T-cell (primary cell): ENCODE measurements at regions of chr20 and their contacts with region 1.

Region 1: DNA sequence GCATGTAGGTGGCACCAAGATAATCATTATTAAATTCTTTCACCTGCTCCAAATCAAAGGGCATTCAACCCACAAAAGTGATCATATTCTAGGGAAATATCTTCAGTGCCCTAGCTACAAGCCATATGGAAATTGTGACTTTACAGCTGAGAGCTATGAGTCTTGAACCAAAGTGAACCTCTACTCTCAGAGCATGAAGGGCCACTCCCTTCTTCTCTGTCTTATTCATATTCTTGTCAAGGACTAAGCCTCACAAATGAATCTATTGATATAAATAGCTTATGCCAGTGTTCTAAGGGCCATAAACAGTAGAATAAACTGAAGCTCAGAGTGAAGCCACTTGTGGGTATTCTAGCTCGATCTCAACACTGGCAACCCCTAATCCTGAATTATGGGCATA is 29.6 kb downstream of the SPINT4 start:
- DNase-seq: no peak
- ATAC-seq: no peak
- H3K4me3 ChIP-seq: no peak overlapping the region
- H3K4me3 Mint-ChIP-seq: no peak overlapping the region
- H3K27ac ChIP-seq: no peak overlapping the region
- H3K27ac Mint-ChIP-seq: no peak overlapping the region
- H3K4me1 ChIP-seq: no peaks in the 10 kb centered on the region
- H3K4me1 Mint-ChIP-seq: no peaks in the 10 kb centered on the region
- H3K27me3 ChIP-seq: peaks cover 2 to 4% of the 10 kb centered on the region in 2 experiments
- H3K27me3 Mint-ChIP-seq: peaks cover 16 to 24% of the 10 kb centered on the region in 2 donors

Region 2: GRCh38 chr20:45436732-45437391 is 314.9 kb before region 1 on chr20:
- CTCF ChIA-PET with region 1: no interaction called
- POLR2A ChIA-PET with region 1: no interaction called
- DNase-seq: peak; percentile 63 to 93 (median 81)
- ATAC-seq: peak; percentile 98 to 99 (median 99)
- H3K4me3 ChIP-seq: peak overlapping the region; percentile 50 to 83
- H3K4me3 Mint-ChIP-seq: peak overlapping the region; percentile 80 to 82 (median 81)
- H3K27ac ChIP-seq: no peak overlapping the region
- H3K27ac Mint-ChIP-seq: peak overlapping the region; percentile 27 to 74
- H3K4me1 ChIP-seq: peaks cover 4 to 18% of the 10 kb centered on the region in 2 experiments
- H3K4me1 Mint-ChIP-seq: peaks cover 7 to 23% (median 11%) of the 10 kb centered on the region in 3 donors
- H3K27me3 ChIP-seq: no peaks in the 10 kb centered on the region
- H3K27me3 Mint-ChIP-seq: no peaks in the 10 kb centered on the region

Region 3: GRCh38 chr20:45812157-45813020 is 60.7 kb after region 1 on chr20 and contains the start of gene UBE2C:
- CTCF ChIA-PET with region 1: no interaction called
- POLR2A ChIA-PET with region 1: no interaction called
- DNase-seq: peak; percentile 75 to 97 (median 94)
- ATAC-seq: peak; percentile 99 to 100 (median 100)
- H3K4me3 ChIP-seq: peak within 1 kb of the TSS; percentile 79 to 84
- H3K4me3 Mint-ChIP-seq: peak within 1 kb of the TSS; percentile 77 to 86 (median 82)
- H3K27ac ChIP-seq: no peak within 1 kb of the TSS
- H3K27ac Mint-ChIP-seq: peak within 1 kb of the TSS; percentile 39 to 80
- H3K4me1 ChIP-seq: peaks cover 7 to 16% of the 10 kb centered on the region in 2 experiments
- H3K4me1 Mint-ChIP-seq: peaks cover 15 to 19% (median 17%) of the 10 kb centered on the region in 3 donors
- H3K27me3 ChIP-seq: no peaks in the 10 kb centered on the region
- H3K27me3 Mint-ChIP-seq: no peaks in the 10 kb centered on the region
- total RNA-seq, gene UBE2C: 0.44 to 2.4 (median 1.2) TPM

Region 4: DNA sequence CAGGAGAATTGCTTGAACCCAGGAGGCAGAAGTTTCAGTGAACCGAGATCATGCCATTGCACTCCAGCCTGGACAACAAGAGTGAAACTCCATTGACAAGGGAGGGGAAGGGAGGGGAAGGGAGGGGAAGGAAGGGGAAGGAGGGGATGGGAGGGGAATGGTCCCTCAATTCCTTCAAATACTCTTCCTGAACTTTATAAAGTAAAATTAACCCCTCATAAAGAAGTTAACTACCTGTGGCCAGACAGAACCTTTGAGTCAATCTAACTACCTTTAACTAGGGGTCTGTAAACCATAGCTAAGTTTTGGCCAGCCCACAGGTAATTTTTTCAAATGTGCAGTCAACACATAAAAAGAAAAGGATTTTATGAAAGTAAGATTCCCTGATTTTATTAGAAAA is 1473.7 kb after region 1 on chr20:
- CTCF ChIA-PET with region 1: interaction called in 1 of 2 experiments, 10 read pairs
- POLR2A ChIA-PET with region 1: no interaction called
- DNase-seq: no peak
- ATAC-seq: no peak
- H3K4me3 ChIP-seq: no peak overlapping the region
- H3K4me3 Mint-ChIP-seq: no peak overlapping the region
- H3K27ac ChIP-seq: no peak overlapping the region
- H3K27ac Mint-ChIP-seq: no peak overlapping the region
- H3K4me1 ChIP-seq: no peaks in the 10 kb centered on the region
- H3K4me1 Mint-ChIP-seq: peaks cover 3 to 8% (median 5%) of the 10 kb centered on the region in 3 donors
- H3K27me3 ChIP-seq: no peaks in the 10 kb centered on the region
- H3K27me3 Mint-ChIP-seq: no peaks in the 10 kb centered on the region